Endothelial cell of umbilical vein (primary cell): ENCODE measurements at regions of chr20 and their contacts with region 1.

Region 1: GRCh38 chr20:20860078-20860806 is 147.8 kb upstream of the RALGAPA2 start:
- DNase-seq: peak; percentile 81
- H3K4me3 ChIP-seq: no peak overlapping the region
- H3K27ac ChIP-seq: no peak overlapping the region
- H3K4me1 ChIP-seq: no peaks in the 10 kb centered on the region
- H3K27me3 ChIP-seq: peaks cover 5 to 7% of the 10 kb centered on the region in 2 experiments
- CTCF ChIP-seq: peak; percentile 89 to 98
- POLR2A ChIP-seq: no peak

Region 2: GRCh38 chr20:20664795-20665589 is 195.2 kb before region 1 on chr20:
- CTCF ChIA-PET with region 1: interaction called, 4 read pairs
- POLR2A ChIA-PET with region 1: no interaction called
- dilution Hi-C with region 1: no loop called
- intact Hi-C with region 1: loop called (anchors 1 kb)
- DNase-seq: peak; percentile 77
- H3K4me3 ChIP-seq: no peak overlapping the region
- H3K27ac ChIP-seq: no peak overlapping the region
- H3K4me1 ChIP-seq: peaks cover 26% of the 10 kb centered on the region
- H3K27me3 ChIP-seq: no peaks in the 10 kb centered on the region
- CTCF ChIP-seq: peak; percentile 52 to 60
- POLR2A ChIP-seq: peak; percentile 27

Region 3: DNA sequence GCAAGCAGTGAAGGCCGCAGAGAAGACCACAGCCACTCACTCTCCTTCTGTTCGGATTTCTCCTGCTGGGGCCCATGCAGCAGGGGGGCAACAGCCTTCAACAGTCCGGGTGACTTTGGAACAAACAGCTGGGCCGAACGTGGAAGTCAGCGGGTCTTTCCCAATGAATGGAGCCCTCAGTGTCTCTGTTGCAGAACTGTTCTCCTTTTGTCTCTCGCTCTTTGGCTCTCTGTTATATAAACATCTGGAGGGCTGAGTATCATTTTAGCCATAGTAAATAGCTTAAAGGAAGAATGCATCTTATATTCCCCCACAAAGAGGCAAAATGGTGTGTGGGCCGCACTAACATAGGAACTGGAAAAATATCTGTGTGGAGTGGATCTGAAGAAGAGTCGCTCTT is 11.1 kb before region 1 on chr20:
- CTCF ChIA-PET with region 1: interaction called, 19 read pairs
- POLR2A ChIA-PET with region 1: no interaction called
- dilution Hi-C with region 1: no loop called
- intact Hi-C with region 1: no loop called
- DNase-seq: no peak
- H3K4me3 ChIP-seq: no peak overlapping the region
- H3K27ac ChIP-seq: no peak overlapping the region
- H3K4me1 ChIP-seq: no peaks in the 10 kb centered on the region
- H3K27me3 ChIP-seq: peaks cover 0 to 3% of the 10 kb centered on the region in 2 experiments
- CTCF ChIP-seq: no peak
- POLR2A ChIP-seq: no peak

Region 4: DNA sequence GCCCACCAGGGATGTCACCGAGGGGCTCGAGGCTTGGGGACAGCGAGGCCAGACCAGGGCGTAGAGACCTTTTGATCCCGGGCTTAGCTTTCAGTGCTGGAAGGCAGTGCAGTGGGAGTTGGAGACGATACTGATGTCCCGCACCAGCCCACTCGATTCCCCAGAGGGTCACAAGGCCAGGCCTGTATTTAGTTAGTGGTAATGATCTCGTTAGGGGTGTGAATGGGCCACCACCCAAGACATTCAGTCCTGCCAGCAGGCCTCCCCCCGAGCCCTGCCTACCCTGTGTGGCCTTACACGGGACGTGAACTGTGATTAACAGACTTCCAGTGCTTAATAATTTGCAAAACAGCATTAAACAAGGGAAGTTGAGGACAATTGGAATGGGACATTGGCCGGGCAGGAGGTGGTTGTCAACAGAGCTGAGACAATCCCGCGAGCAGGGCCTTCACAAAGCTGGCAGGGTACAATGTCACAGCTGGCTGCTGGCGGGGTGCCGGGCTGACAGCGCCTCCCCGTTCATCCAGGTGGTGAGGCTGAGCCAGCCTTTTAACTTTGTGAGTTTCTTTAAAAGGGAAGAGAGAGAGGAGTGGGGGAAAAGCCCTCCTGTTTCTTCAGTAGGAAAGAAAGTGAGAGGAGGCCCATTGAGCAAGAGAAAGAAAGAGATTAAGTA is 27.5 kb after region 1 on chr20:
- CTCF ChIA-PET with region 1: no interaction called
- POLR2A ChIA-PET with region 1: no interaction called
- dilution Hi-C with region 1: no loop called
- intact Hi-C with region 1: no loop called
- DNase-seq: no peak
- H3K4me3 ChIP-seq: no peak overlapping the region
- H3K27ac ChIP-seq: no peak overlapping the region
- H3K4me1 ChIP-seq: no peaks in the 10 kb centered on the region
- H3K27me3 ChIP-seq: no peaks in the 10 kb centered on the region
- CTCF ChIP-seq: no peak
- POLR2A ChIP-seq: no peak

Region 5: DNA sequence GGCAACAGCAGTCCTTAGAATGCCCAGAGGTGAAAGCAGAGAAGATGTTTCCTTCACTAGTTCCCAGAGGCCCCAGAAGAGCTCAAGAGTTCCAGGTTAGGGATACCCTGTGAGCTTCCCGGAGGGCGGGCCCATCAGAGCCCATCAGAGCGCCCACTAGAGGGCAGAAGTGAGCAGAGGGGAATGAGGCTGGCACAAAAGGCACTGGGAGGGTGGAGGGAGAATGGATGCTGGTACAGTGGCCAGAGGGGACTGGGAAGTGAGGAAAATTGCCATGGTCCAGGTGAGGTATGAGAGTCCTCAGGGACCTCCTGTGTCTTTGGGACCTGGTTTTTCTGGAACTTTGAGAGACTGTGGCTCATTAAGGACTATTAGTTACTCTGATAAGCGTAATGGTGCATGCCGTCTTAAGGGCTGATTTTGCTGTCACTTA is 188.6 kb after region 1 on chr20:
- CTCF ChIA-PET with region 1: interaction called, 8 read pairs
- POLR2A ChIA-PET with region 1: no interaction called
- dilution Hi-C with region 1: no loop called
- intact Hi-C with region 1: loop called (anchors 10 kb)
- DNase-seq: peak; percentile 10
- H3K4me3 ChIP-seq: no peak overlapping the region
- H3K27ac ChIP-seq: no peak overlapping the region
- H3K4me1 ChIP-seq: no peaks in the 10 kb centered on the region
- H3K27me3 ChIP-seq: peaks cover 0 to 2% of the 10 kb centered on the region in 2 experiments
- CTCF ChIP-seq: peak; percentile 73 to 81
- POLR2A ChIP-seq: no peak

Region 6: DNA sequence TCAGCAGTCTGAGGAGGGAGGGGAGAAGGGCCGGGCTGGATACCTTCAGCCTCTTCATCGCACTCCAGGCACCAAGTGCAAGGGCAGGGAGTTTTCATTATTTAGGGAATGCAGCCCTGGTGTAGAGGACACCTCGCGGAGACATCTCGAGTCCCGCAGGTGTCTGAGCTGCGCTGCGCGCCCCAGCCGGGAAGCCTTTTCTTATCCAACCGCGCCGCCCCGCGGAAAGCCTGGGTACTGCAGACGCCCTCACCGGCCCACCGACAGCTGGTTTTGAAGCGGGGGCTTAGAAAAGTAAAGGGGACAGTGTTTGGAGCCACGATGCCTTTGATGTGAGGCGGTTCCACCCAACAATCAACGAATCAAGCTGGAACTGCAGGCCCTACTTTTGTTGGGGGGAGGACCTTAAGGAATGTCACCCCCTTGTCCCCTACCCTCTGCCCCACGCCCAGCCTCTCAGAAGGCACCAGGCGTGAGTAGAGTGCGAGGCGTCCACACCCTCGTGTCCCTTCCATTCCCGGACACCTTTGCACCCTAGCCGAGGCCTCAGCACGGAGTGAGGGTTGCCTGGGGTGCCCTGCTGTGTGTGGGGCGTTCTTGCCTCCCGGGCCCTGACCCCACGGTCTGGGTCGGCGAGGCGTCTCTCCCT is 645.0 kb after region 1 on chr20:
- CTCF ChIA-PET with region 1: interaction called, 137 read pairs
- POLR2A ChIA-PET with region 1: no interaction called
- dilution Hi-C with region 1: no loop called
- intact Hi-C with region 1: loop called (anchors 1 kb)
- DNase-seq: peak; percentile 45
- H3K4me3 ChIP-seq: no peak overlapping the region
- H3K27ac ChIP-seq: no peak overlapping the region
- H3K4me1 ChIP-seq: peaks cover 4% of the 10 kb centered on the region
- H3K27me3 ChIP-seq: peaks cover 40 to 45% of the 10 kb centered on the region in 2 experiments
- CTCF ChIP-seq: peak; percentile 93 to 96
- POLR2A ChIP-seq: no peak

Region 7: DNA sequence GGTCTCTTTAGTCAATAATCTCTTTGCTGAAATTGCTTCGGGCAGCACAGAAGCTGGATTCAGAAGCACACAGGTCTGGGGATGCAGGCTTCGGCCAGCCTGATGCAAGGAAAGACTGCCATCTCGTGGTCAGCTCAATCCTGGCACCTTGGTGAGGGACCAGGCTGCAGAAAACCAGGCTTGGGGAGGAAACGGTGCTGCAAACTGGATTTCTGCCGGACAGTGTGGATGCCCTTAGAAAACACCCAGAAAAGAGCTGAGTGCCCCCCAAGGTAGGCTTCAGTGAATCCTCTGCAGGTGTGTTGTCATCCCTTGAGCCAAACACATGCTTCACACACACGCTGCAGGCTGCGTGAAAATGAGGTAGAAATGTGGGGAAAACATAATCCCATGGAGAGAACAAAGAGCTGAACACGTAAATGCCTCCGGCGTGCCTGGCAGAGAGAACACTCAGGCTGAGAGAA is 755.4 kb after region 1 on chr20:
- CTCF ChIA-PET with region 1: interaction called, 29 read pairs
- POLR2A ChIA-PET with region 1: no interaction called
- dilution Hi-C with region 1: no loop called
- intact Hi-C with region 1: loop called (anchors 5 kb)
- DNase-seq: peak; percentile 39
- H3K4me3 ChIP-seq: no peak overlapping the region
- H3K27ac ChIP-seq: no peak overlapping the region
- H3K4me1 ChIP-seq: no peaks in the 10 kb centered on the region
- H3K27me3 ChIP-seq: no peaks in the 10 kb centered on the region
- CTCF ChIP-seq: peak; percentile 54 to 81
- POLR2A ChIP-seq: no peak